IMR-90 (cell line): ENCODE measurements at regions of chr3 and their contacts with region 1.

Region 1: GRCh38 chr3:139389458-139390209 is at the start of gene COPB2:
- DNase-seq: peak; percentile 99
- ATAC-seq: peak; percentile 98
- H3K4me3 ChIP-seq: peak within 1 kb of the TSS; percentile 72
- H3K27ac ChIP-seq: peak within 1 kb of the TSS; percentile 94
- H3K4me1 ChIP-seq: peaks cover 1% of the 10 kb centered on the region
- H3K27me3 ChIP-seq: no peaks in the 10 kb centered on the region
- CTCF ChIP-seq: no peak
- POLR2A ChIP-seq: peak; percentile 92
- RAD21 ChIP-seq: no peak
- total RNA-seq, gene COPB2: 363 and 549 TPM in 2 replicates

Region 2: GRCh38 chr3:139302084-139302800 is 87.4 kb before region 1 on chr3:
- CTCF ChIA-PET with region 1: no interaction called
- POLR2A ChIA-PET with region 1: no interaction called
- dilution Hi-C with region 1: no loop called
- in situ Hi-C with region 1: no loop called
- intact Hi-C with region 1: no loop called
- DNase-seq: peak; percentile 99
- ATAC-seq: peak; percentile 91
- H3K4me3 ChIP-seq: no peak overlapping the region
- H3K27ac ChIP-seq: peak overlapping the region; percentile 87
- H3K4me1 ChIP-seq: peaks cover 32% of the 10 kb centered on the region
- H3K27me3 ChIP-seq: no peaks in the 10 kb centered on the region
- CTCF ChIP-seq: no peak
- POLR2A ChIP-seq: no peak
- RAD21 ChIP-seq: peak; percentile 23; the same call in 1 of the 2 replicates

Region 3: DNA sequence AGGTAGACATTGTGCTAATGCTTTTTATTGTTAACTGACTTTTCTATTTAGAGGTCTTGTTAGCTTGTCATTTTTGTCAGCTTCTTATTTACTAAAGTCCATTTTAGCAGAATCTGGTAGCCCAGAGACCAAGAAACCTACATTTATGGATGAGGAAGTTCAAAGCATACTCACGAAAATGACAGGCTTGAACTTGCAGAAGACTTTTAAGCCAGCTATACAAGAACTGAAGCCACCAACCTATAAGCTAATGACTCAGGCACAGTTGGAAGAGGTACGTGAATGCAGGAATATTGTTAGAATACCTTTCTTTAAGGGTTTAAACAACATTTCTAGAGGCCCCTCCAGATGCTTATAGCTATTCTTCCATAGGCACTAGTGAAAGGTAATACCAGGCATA is 42.9 kb before region 1 on chr3:
- CTCF ChIA-PET with region 1: no interaction called
- POLR2A ChIA-PET with region 1: no interaction called
- dilution Hi-C with region 1: no loop called
- in situ Hi-C with region 1: loop called (anchors 5 kb)
- intact Hi-C with region 1: loop called (anchors 5 kb)
- DNase-seq: no peak
- ATAC-seq: no peak
- H3K4me3 ChIP-seq: no peak overlapping the region
- H3K27ac ChIP-seq: no peak overlapping the region
- H3K4me1 ChIP-seq: peaks cover 2% of the 10 kb centered on the region
- H3K27me3 ChIP-seq: no peaks in the 10 kb centered on the region
- CTCF ChIP-seq: no peak
- POLR2A ChIP-seq: no peak
- RAD21 ChIP-seq: no peak

Region 4: GRCh38 chr3:139353920-139354556 is 35.6 kb before region 1 on chr3:
- CTCF ChIA-PET with region 1: no interaction called
- POLR2A ChIA-PET with region 1: no interaction called
- dilution Hi-C with region 1: no loop called
- in situ Hi-C with region 1: loop called (anchors 5 kb)
- intact Hi-C with region 1: loop called (anchors 5 kb)
- DNase-seq: peak; percentile 71
- ATAC-seq: peak; percentile 91
- H3K4me3 ChIP-seq: no peak overlapping the region
- H3K27ac ChIP-seq: no peak overlapping the region
- H3K4me1 ChIP-seq: no peaks in the 10 kb centered on the region
- H3K27me3 ChIP-seq: no peaks in the 10 kb centered on the region
- CTCF ChIP-seq: peak; percentile 84
- POLR2A ChIP-seq: no peak
- RAD21 ChIP-seq: peak; percentile 37